Aorta (tissue), 5 donors: ENCODE measurements at regions of chr6 and their contacts with region 1.

Region 1: DNA sequence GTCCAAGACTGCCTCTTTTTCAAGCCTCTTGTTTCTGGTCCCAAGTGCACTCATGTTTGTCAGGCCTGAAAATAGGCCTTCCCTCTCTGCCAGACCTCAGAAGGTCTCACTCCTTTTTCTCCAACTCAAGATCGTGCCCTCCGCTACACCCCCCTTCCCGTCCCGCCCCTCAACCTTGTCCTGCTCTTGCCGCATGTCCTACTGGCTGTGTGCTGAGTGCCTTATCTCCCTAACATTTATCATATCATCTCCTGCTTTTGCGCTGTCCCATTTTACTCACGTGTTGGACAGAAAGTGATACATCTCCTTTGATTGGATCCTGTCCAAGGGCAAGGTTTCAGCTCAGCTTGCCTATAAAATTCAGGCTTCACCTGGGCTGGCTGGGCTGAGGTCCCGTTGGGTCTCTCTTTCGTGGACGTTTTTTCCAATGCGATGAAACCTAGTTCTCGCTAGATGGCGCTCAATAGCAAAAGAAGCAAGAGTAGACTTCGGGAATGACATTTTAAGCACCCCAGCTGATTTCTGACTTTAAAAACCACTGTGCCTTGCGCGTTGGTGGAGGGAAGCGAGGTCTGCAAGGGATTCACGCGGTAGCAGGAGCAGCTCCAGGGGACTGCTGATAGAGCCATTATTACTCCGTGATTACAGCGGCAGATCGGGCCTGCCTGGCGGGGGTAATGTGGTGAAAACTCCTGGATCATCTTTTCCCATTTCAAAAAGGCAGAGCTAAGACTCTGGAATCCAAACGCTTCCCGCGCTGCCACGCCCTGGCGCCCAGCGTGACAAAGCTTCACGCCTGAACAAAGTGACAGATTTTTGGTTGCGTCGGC is 137.6 kb downstream of the IMPG1 start:
- DNase-seq: no peak
- ATAC-seq: peak; percentile 74
- H3K4me3 ChIP-seq: peak overlapping the region in 1 of 2 donors; percentile 19
- H3K27ac ChIP-seq: no peak overlapping the region
- H3K4me1 ChIP-seq: no peaks in the 10 kb centered on the region
- H3K27me3 ChIP-seq: no peaks in the 10 kb centered on the region

Region 2: GRCh38 chr6:75711173-75711572 is 223.7 kb before region 1 on chr6:
- intact Hi-C with region 1: no loop called
- DNase-seq: no peak
- ATAC-seq: no peak
- H3K4me3 ChIP-seq: no peak overlapping the region
- H3K27ac ChIP-seq: no peak overlapping the region
- H3K4me1 ChIP-seq: no peaks in the 10 kb centered on the region
- H3K27me3 ChIP-seq: no peaks in the 10 kb centered on the region

Region 3: GRCh38 chr6:75855052-75855451 is 79.8 kb before region 1 on chr6:
- intact Hi-C with region 1: loop called in 1 of 2 experiments (anchors 10 kb)
- DNase-seq: no peak
- ATAC-seq: no peak
- H3K4me3 ChIP-seq: no peak overlapping the region
- H3K27ac ChIP-seq: no peak overlapping the region
- H3K4me1 ChIP-seq: peaks cover 0 to 2% of the 10 kb centered on the region in 2 donors
- H3K27me3 ChIP-seq: no peaks in the 10 kb centered on the region